Left cardiac atrium (tissue), 4 donors: ENCODE measurements at regions of chr12 and their contacts with region 1.

Region 1: DNA sequence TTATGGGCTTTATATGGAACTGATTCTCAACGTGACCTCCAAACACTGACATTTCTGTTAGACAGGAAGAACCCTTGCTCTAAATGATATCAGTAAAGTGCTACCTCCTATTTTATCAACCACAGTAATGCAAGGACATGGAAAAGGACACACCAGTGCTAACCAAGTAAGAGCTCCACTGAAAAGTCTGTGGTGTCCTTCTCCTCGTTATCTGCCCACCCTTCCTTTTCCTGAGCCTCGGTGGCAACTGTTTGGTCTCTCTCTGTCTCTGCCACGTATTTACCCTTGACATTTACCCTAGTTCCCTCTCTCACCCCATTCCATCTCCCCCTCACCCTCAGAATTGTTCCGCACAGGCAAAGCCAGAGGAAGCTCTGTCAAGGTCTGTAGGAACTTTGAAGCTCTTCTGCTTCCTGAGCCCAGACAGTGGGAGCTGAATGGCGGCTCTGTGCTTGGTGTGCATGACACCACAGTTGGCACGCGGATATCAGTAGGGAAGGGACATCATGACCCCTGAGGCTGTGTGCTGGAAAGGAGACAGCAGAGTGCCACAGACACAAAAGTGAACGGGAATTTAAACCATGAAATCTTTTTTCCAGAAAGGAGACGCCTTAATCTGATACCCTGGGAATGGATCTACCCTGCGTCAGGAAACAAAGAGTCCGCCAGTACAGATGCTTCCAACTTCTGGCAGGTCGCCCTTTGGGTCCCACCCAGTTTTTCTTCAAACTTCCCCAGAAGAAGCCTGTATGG is 50.8 kb downstream of the NTN4 start:
- DNase-seq: peak; percentile 88
- ATAC-seq: peak; percentile 87 to 90

Region 2: GRCh38 chr12:95694136-95694535 is 45.6 kb before region 1 on chr12:
- intact Hi-C with region 1: loop called in 1 of 2 experiments (anchors 5 kb)
- DNase-seq: no peak
- ATAC-seq: peak in 1 of 2 donors; percentile 33

Region 3: DNA sequence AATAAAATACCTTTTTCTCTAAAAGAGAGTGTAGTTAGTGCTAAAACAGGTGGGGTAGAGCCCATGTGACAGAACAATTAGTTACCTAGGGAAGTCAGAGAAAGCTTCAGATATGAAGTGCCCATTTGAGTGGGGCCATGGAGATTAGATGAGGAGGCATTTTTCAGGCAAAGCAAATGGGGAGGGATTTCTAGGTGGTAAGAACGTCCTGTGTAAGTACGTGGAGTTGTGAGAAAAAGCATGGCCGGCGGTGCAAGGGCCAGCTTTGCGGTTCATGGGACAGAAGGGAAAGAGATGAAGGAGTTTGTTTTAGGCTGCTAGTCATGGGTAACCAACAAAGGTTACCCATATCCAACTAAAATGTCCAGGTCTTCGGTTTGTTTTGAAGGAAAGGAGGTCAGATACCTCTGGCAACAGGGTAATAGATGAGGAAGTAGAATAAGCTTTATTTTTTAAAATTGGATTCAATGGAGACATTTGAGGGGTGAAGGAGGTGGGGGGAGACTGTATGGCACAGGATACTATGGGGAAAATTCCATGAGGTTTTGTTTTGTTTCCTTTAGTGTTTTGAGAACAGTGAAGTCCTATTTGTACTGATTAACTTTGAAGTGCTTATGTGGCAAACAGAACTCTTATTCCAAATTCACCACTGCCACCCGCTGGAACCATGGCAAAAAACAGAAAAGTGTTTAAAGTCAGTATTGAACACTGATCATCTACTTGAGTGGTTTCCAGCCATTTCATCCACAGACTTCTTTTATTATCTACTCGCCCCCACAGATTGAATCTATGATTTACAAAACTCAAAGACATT is 109.0 kb after region 1 on chr12:
- intact Hi-C with region 1: no loop called
- DNase-seq: no peak
- ATAC-seq: no peak